Sigmoid colon (tissue), 7 donors: ENCODE measurements at regions of chr11 and their contacts with region 1.

Region 1: DNA sequence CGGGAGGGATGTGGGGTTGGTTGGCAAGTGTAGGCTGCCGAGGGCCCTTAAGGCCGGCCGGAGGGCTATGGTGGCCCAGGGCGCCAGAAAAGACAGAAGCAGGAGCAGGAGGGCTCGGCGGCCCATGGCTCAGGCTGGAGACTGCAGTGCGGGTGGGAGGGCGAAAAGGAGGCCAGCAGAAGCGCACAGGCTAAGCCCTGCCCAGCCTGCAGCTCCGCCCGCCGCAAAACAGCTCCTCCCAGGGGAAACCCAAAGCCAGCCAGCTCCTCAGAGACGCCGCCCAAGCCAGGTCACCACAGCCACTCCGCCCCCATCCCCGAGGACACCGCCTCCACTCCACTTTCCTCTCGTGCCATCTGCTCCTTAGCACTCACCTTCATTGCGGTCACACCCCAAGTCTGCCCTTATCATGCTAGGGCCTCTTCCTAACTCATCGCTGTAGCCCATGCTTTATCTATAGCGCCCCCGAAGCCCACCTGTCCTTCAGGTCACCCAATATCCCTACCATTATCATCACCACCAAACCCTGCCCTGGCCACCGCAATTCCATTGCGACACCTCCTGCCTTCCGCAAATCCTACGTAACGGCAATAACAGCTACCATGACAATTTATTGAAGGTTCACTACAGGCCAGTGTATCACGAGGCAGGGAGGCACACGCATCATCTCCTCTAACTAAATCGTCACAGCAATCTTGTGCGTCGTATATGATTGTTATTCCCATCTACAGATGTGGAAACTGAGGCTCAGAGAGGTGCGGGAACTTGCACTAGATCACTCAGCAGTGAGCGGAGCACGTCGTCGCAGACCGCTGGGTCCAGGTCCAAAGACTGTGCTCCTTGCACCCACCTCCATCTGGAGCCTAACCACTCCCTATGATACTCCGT is at the start of gene PRCP:
- DNase-seq: peak; percentile 97
- H3K4me3 ChIP-seq: peak within 1 kb of the TSS; percentile 57 to 70 (median 60)
- H3K27ac ChIP-seq: peak within 1 kb of the TSS; percentile 87 to 96 (median 94)
- H3K4me1 ChIP-seq: peaks cover 0 to 31% (median 26%) of the 10 kb centered on the region in 4 donors
- H3K27me3 ChIP-seq: no peaks in the 10 kb centered on the region
- CTCF ChIP-seq: no peak
- EP300 ChIP-seq: peak in 3 of 4 donors; percentile 41 to 59 (median 42)
- POLR2A ChIP-seq: peak; percentile 66 to 69
- total RNA-seq, gene PRCP: 27.4 to 40.2 (median 35.5) TPM

Region 2: DNA sequence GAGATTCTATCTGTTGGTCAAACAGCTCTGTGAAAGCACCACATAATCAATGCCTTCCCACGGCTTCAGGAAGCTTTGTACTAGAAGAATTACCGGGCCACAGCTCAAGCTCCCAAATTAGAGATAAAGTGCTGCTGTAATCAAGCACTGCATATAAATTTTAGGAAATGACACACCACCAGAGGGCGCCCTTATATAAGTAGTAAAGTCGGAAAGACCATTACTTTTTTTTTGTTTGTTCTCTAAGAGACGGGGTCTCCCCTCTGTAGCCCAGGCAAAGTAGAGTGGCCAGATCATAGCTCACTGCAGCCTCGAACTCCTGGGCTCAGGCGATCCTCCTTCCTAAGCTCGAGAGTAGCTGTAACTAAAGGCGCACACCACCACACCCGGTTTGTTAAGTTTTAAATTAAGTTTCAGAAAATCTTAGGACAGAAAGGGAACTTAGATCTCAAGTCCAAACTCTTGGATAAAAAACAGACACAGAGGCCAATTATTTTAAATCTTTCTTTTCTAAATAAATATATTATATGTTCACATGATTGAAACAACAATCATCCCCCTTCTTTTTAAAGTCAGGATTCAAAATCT is 32.9 kb before region 1 on chr11:
- intact Hi-C with region 1: loop called (anchors 1 kb)
- DNase-seq: peak; percentile 83
- H3K4me3 ChIP-seq: peak overlapping the region in 2 of 4 donors; percentile 10 to 21
- H3K27ac ChIP-seq: no peak overlapping the region
- H3K4me1 ChIP-seq: peaks cover 0 to 37% (median 8%) of the 10 kb centered on the region in 4 donors
- H3K27me3 ChIP-seq: no peaks in the 10 kb centered on the region
- CTCF ChIP-seq: peak in 3 of 4 experiments; percentile 50 to 78 (median 51)
- EP300 ChIP-seq: no peak
- POLR2A ChIP-seq: no peak

Region 3: DNA sequence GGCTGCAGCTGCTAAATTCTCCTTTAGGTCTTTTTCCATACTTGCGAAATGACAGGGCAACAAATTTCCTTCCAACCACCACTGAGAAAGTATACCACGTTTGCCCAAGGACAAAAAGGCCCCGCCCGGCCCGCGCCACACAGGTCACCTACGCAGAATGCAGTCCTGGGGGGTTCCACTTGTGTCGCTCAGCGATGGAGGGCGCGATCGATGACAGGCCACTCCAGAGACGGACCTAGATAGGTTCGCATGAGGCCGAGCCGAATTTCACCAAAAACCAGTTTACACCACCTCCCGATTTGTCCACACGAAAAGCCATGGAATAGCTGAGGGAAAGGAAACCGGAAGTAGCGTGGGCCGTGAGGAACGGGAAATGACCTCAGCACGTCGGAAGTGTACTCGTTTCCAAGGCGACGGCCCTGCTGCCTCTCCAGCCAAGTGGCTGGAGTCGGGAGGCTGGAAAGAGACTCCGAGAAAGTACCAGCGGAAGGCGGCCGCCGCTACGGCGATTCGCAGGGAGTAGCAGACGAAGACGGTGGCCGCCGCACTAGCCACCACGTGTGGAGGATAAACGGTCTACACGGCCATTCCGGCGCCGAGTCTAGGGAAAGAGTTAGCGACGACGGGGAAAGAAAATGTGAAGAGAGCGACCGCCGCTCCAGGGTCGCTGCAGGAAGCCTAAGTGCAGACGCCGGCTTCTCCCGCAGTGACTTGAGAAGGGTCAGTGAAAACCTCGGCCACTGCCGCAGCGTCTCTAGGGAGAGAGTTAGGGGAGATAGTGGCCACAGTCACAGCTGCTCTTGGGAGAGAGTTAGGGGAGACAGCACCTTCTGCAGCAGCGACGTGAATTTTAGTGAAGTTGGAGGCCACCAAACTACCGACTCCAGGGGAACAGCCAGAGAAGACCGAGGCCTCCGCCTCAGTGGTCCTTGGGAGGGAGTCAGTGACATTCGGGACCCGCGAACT is 293.1 kb after region 1 on chr11 and contains the start of gene ANKRD42:
- intact Hi-C with region 1: loop called (anchors 2 kb)
- DNase-seq: peak; percentile 97
- H3K4me3 ChIP-seq: peak within 1 kb of the TSS; percentile 73 to 81 (median 74)
- H3K27ac ChIP-seq: peak within 1 kb of the TSS; percentile 87 to 94 (median 90)
- H3K4me1 ChIP-seq: peaks cover 0 to 43% (median 37%) of the 10 kb centered on the region in 4 donors
- H3K27me3 ChIP-seq: no peaks in the 10 kb centered on the region
- CTCF ChIP-seq: peak in 1 of 4 experiments; percentile 25
- EP300 ChIP-seq: peak in 2 of 4 donors; percentile 1 to 23
- POLR2A ChIP-seq: peak; percentile 62 to 85
- total RNA-seq, gene ANKRD42: 9.6 to 12.2 (median 11.0) TPM

Region 4: DNA sequence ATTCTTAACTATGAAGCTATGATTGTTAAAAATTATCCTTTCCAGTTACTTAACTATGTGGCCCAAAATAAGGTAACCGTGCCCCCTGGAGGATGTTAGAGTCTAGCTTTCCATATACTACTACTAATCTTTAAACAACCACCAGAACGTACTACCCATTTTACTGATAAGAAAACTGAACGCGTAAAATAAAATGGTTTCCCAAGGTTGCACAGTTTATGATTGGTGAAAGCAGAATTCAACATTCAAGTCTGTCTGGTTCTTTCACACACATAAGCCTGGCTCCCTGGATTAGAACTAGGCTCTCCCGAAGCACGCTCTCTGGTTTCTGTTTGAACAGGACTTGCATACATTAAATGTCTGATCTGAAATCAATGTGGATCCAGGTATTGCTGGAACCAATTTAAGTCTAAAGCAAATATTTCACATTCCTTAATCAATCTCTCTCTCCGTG is 823.5 kb after region 1 on chr11:
- intact Hi-C with region 1: loop called (anchors 10 kb)
- DNase-seq: no peak
- H3K4me3 ChIP-seq: peak overlapping the region; percentile 9 to 40 (median 36)
- H3K27ac ChIP-seq: peak overlapping the region; percentile 48 to 71 (median 63)
- H3K4me1 ChIP-seq: peaks cover 0 to 26% (median 18%) of the 10 kb centered on the region in 4 donors
- H3K27me3 ChIP-seq: no peaks in the 10 kb centered on the region
- CTCF ChIP-seq: peak in 1 of 4 experiments; percentile 32
- EP300 ChIP-seq: no peak
- POLR2A ChIP-seq: no peak

Region 5: DNA sequence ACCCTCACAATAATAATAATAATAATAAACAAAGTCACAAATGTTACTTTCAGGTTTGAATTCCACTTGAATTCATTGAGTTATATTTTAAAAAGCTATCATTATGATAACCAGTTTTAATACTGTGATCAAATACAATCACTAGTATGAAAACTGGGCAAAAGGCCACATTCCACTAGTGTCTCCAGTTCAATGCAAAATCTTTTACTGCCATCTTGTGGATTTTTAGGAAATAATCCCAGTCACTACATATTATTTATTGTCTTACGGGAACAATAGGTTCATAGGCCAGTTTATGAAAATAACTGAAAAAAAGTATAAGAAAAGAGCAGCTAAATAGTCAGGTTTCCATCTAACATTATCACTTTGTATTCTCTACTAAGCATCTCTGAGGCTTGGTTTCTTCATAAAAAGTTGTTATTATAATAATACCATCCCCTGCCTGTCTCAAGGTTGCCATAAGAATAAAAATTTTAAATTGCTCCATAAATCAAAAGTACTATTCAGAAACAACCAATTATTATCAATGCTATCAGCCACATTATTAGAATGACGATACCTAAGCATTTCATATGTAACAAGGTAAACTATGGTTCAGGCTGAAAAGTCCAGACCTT is 919.5 kb after region 1 on chr11:
- intact Hi-C with region 1: loop called (anchors 10 kb)
- DNase-seq: no peak
- H3K4me3 ChIP-seq: no peak overlapping the region
- H3K27ac ChIP-seq: no peak overlapping the region
- H3K4me1 ChIP-seq: no peaks in the 10 kb centered on the region
- H3K27me3 ChIP-seq: no peaks in the 10 kb centered on the region
- CTCF ChIP-seq: peak in 3 of 4 experiments; percentile 44 to 56 (median 50)
- EP300 ChIP-seq: no peak
- POLR2A ChIP-seq: no peak